ENCODE measurements at regions of chr10 and their contacts with region 1.

Region 1: GRCh38 chr10:79347226-79347893 is at the start of gene PPIF:
- DNase-seq: peak; percentile 100
- ATAC-seq: peak; percentile 90
- H3K4me3 ChIP-seq: peak within 1 kb of the TSS; percentile 69
- H3K27ac ChIP-seq: peak within 1 kb of the TSS; percentile 69
- H3K4me1 ChIP-seq: peaks cover 37% of the 10 kb centered on the region
- H3K27me3 ChIP-seq: no peaks in the 10 kb centered on the region
- CTCF ChIP-seq: peak; percentile 100
- total RNA-seq, gene PPIF: 381 and 472 TPM in 2 replicates

Region 2: GRCh38 chr10:79254333-79255006 is 92.9 kb before region 1 on chr10:
- CTCF ChIA-PET with region 1: no interaction called
- POLR2A ChIA-PET with region 1: interaction called, 10 read pairs
- intact Hi-C with region 1: no loop called
- DNase-seq: no peak
- ATAC-seq: no peak
- H3K4me3 ChIP-seq: no peak overlapping the region
- H3K27ac ChIP-seq: no peak overlapping the region
- H3K4me1 ChIP-seq: no peaks in the 10 kb centered on the region
- H3K27me3 ChIP-seq: no peaks in the 10 kb centered on the region
- CTCF ChIP-seq: no peak

Region 3: GRCh38 chr10:79316671-79317431 is 30.5 kb before region 1 on chr10:
- CTCF ChIA-PET with region 1: no interaction called
- POLR2A ChIA-PET with region 1: no interaction called
- intact Hi-C with region 1: loop called (anchors 2 kb)
- DNase-seq: peak; percentile 55
- ATAC-seq: peak; percentile 17
- H3K4me3 ChIP-seq: no peak overlapping the region
- H3K27ac ChIP-seq: peak overlapping the region; percentile 63
- H3K4me1 ChIP-seq: peaks cover 44% of the 10 kb centered on the region
- H3K27me3 ChIP-seq: no peaks in the 10 kb centered on the region
- CTCF ChIP-seq: peak; percentile 50

Region 4: DNA sequence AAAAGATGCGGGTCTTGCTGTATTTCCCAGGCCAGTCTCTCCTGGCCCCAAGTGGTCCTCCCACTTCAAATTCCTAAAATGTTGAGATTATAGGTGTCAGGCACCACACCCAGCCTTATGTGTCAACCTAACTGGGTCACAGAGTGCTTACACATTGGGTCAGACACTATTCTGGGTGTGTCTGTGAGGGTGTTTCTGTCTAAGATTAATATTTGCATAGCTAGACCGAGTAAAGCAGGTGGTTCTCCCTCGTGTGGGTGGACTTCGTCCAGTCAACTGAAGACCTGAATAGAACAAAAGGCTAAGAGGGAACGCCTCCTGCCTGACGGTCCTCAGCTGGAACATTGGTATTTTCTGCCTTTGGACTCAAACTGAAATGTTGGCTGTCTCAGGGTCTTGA is 11.4 kb after region 1 on chr10:
- CTCF ChIA-PET with region 1: interaction called, 15 read pairs
- POLR2A ChIA-PET with region 1: no interaction called
- intact Hi-C with region 1: no loop called
- DNase-seq: peak; percentile 71
- ATAC-seq: peak; percentile 62
- H3K4me3 ChIP-seq: no peak overlapping the region
- H3K27ac ChIP-seq: no peak overlapping the region
- H3K4me1 ChIP-seq: no peaks in the 10 kb centered on the region
- H3K27me3 ChIP-seq: no peaks in the 10 kb centered on the region
- CTCF ChIP-seq: no peak

Region 5: GRCh38 chr10:79502561-79503309 is 155.4 kb after region 1 on chr10:
- CTCF ChIA-PET with region 1: no interaction called
- POLR2A ChIA-PET with region 1: no interaction called
- intact Hi-C with region 1: loop called (anchors 1 kb)
- DNase-seq: peak; percentile 96
- ATAC-seq: peak; percentile 98
- H3K4me3 ChIP-seq: peak overlapping the region; percentile 8; the same call in 1 of the 2 replicates
- H3K27ac ChIP-seq: no peak overlapping the region
- H3K4me1 ChIP-seq: peaks cover 1% of the 10 kb centered on the region; the same call in 1 of the 2 replicates
- H3K27me3 ChIP-seq: peaks cover 12% of the 10 kb centered on the region; the same call in 1 of the 2 replicates
- CTCF ChIP-seq: peak; percentile 96

Region 6: GRCh38 chr10:80015911-80016830 is 668.8 kb after region 1 on chr10:
- CTCF ChIA-PET with region 1: no interaction called
- POLR2A ChIA-PET with region 1: no interaction called
- intact Hi-C with region 1: no loop called
- DNase-seq: no peak
- ATAC-seq: no peak
- H3K4me3 ChIP-seq: no peak overlapping the region
- H3K27ac ChIP-seq: no peak overlapping the region
- H3K4me1 ChIP-seq: peaks cover 10% of the 10 kb centered on the region
- H3K27me3 ChIP-seq: no peaks in the 10 kb centered on the region
- CTCF ChIP-seq: no peak